Dendritic cell treated with granulocyte-macrophage colony-stimulating factor and Interleukin-4, amounts not matched to agents 40 ng/mL and 50 ng/mL, for 4 days (primary cell): ENCODE measurements at regions of chr15 and their contacts with region 1.

Region 1: DNA sequence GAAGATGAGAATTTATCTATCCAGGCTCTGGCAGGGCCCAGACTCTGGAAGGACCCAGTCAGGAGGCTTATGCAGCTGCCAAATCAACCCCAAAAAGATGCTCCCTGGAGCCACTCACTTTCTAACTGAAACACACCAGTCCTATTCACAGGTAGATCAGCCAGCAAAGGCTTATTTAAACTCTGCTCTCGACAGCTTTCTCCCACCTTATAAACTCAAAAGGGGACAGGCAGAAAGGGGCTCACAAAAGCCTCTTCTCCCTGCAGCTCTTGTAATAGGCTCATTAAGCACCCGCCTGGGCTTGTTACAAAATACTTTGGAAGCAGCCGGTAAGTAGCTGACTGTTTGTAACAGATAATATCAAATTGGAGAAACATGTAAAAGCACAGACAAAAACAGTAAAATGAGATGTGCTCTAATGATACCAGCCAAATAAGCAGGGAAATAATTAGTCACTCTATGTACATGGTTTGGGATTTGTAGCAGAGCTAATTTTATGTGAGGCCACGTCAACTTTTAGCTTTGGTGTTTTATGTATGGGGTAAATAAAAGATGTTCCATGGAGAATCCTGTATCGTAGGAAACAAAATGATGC is 213.8 kb downstream of the NR2F2 start:
- H3K4me3 Mint-ChIP-seq: no peak overlapping the region
- H3K27ac Mint-ChIP-seq: no peak overlapping the region
- H3K4me1 Mint-ChIP-seq: peaks cover under 1% of the 10 kb centered on the region
- H3K27me3 Mint-ChIP-seq: peaks cover 9% of the 10 kb centered on the region

Region 2: GRCh38 chr15:96593724-96594123 is 49.5 kb after region 1 on chr15:
- intact Hi-C with region 1: loop called (anchors 10 kb)
- H3K4me3 Mint-ChIP-seq: no peak overlapping the region
- H3K27ac Mint-ChIP-seq: no peak overlapping the region
- H3K4me1 Mint-ChIP-seq: no peaks in the 10 kb centered on the region
- H3K27me3 Mint-ChIP-seq: peaks cover 41% of the 10 kb centered on the region